GM12878 (cell line): ENCODE measurements at regions of chr4 and their contacts with region 1.

Region 1: GRCh38 chr4:108018040-108018883 is 28.6 kb downstream of the HADH start:
- DNase-seq: no peak
- ATAC-seq: peak; percentile 95
- H3K4me3 ChIP-seq: no peak overlapping the region
- H3K27ac ChIP-seq: no peak overlapping the region
- H3K4me1 ChIP-seq: no peaks in the 10 kb centered on the region
- H3K27me3 ChIP-seq: no peaks in the 10 kb centered on the region
- CTCF ChIP-seq: peak; percentile 80 to 90 (median 88)
- EP300 ChIP-seq: no peak
- POLR2A ChIP-seq: no peak
- RAD21 ChIP-seq: peak; percentile 95

Region 2: GRCh38 chr4:107989537-107990386 is 28.5 kb before region 1 on chr4 and contains the start of gene HADH:
- CTCF ChIA-PET with region 1: interaction called, 43 read pairs
- POLR2A ChIA-PET with region 1: interaction called, 4 read pairs
- RAD21 ChIA-PET with region 1: interaction called, 43 read pairs
- SMC1A ChIA-PET with region 1: interaction called, 28 read pairs
- in situ Hi-C with region 1: no loop called
- intact Hi-C with region 1: no loop called
- DNase-seq: peak; percentile 64
- ATAC-seq: peak; percentile 94
- H3K4me3 ChIP-seq: peak within 1 kb of the TSS; percentile 74
- H3K27ac ChIP-seq: peak within 1 kb of the TSS; percentile 73
- H3K4me1 ChIP-seq: peaks cover 18% of the 10 kb centered on the region
- H3K27me3 ChIP-seq: no peaks in the 10 kb centered on the region
- CTCF ChIP-seq: no peak
- EP300 ChIP-seq: no peak; a peak in 1 of 4 replicates
- POLR2A ChIP-seq: peak; percentile 90
- RAD21 ChIP-seq: no peak
- polyA plus RNA-seq, gene HADH: 76.3 to 97.9 TPM

Region 3: GRCh38 chr4:108030332-108030731 is 12.1 kb after region 1 on chr4:
- CTCF ChIA-PET with region 1: interaction called, 50 read pairs
- POLR2A ChIA-PET with region 1: no interaction called
- RAD21 ChIA-PET with region 1: interaction called, 9 read pairs
- SMC1A ChIA-PET with region 1: interaction called, 9 read pairs
- in situ Hi-C with region 1: no loop called
- intact Hi-C with region 1: no loop called
- DNase-seq: no peak
- ATAC-seq: peak; percentile 99
- H3K4me3 ChIP-seq: no peak overlapping the region
- H3K27ac ChIP-seq: no peak overlapping the region
- H3K4me1 ChIP-seq: no peaks in the 10 kb centered on the region
- H3K27me3 ChIP-seq: no peaks in the 10 kb centered on the region
- CTCF ChIP-seq: peak; percentile 61 to 76 (median 63)
- EP300 ChIP-seq: no peak
- POLR2A ChIP-seq: no peak
- RAD21 ChIP-seq: peak; percentile 96

Region 4: GRCh38 chr4:108181704-108182103 is 163.4 kb after region 1 on chr4:
- CTCF ChIA-PET with region 1: interaction called, 25 read pairs
- POLR2A ChIA-PET with region 1: no interaction called
- RAD21 ChIA-PET with region 1: interaction called, 5 read pairs
- SMC1A ChIA-PET with region 1: interaction called, 11 read pairs
- in situ Hi-C with region 1: no loop called
- intact Hi-C with region 1: no loop called
- DNase-seq: no peak
- ATAC-seq: peak; percentile 93
- H3K4me3 ChIP-seq: no peak overlapping the region
- H3K27ac ChIP-seq: no peak overlapping the region
- H3K4me1 ChIP-seq: no peaks in the 10 kb centered on the region
- H3K27me3 ChIP-seq: no peaks in the 10 kb centered on the region; a peak in 2 of 4 replicates
- CTCF ChIP-seq: peak; percentile 38 to 48 (median 46); a peak in 5 of 6 replicates
- EP300 ChIP-seq: no peak
- POLR2A ChIP-seq: no peak
- RAD21 ChIP-seq: peak; percentile 55

Region 5: GRCh38 chr4:108570993-108571569 is 552.8 kb after region 1 on chr4:
- CTCF ChIA-PET with region 1: interaction called, 90 read pairs
- POLR2A ChIA-PET with region 1: no interaction called
- RAD21 ChIA-PET with region 1: interaction called, 39 read pairs
- SMC1A ChIA-PET with region 1: interaction called, 34 read pairs
- in situ Hi-C with region 1: loop called (anchors 5 kb)
- intact Hi-C with region 1: loop called (anchors 1 kb)
- DNase-seq: no peak
- ATAC-seq: no peak
- H3K4me3 ChIP-seq: no peak overlapping the region
- H3K27ac ChIP-seq: no peak overlapping the region
- H3K4me1 ChIP-seq: no peaks in the 10 kb centered on the region
- H3K27me3 ChIP-seq: no peaks in the 10 kb centered on the region; a peak in 1 of 4 replicates
- CTCF ChIP-seq: no peak
- EP300 ChIP-seq: no peak
- POLR2A ChIP-seq: no peak
- RAD21 ChIP-seq: no peak